CD14-positive monocyte (primary cell): ENCODE measurements at regions of chr16 and their contacts with region 1.

Region 1: GRCh38 chr16:81469710-81470535 is 25.3 kb downstream of the CMIP start:
- DNase-seq: peak; percentile 77 to 91 (median 78)
- H3K4me3 ChIP-seq: peak overlapping the region in 1 of 3 experiments; percentile 55
- H3K4me3 Mint-ChIP-seq: peak overlapping the region; percentile 67 to 77
- H3K27ac ChIP-seq: peak overlapping the region; percentile 82 to 87
- H3K27ac Mint-ChIP-seq: peak overlapping the region; percentile 89 to 97 (median 96)
- H3K4me1 ChIP-seq: peaks cover 98 to 100% of the 10 kb centered on the region in 2 donors
- H3K4me1 Mint-ChIP-seq: peaks cover 93% of the 10 kb centered on the region
- H3K27me3 ChIP-seq: no peaks in the 10 kb centered on the region
- H3K27me3 Mint-ChIP-seq: peaks cover 0 to 6% (median 3%) of the 10 kb centered on the region in 3 donors
- CTCF ChIP-seq: no peak

Region 2: DNA sequence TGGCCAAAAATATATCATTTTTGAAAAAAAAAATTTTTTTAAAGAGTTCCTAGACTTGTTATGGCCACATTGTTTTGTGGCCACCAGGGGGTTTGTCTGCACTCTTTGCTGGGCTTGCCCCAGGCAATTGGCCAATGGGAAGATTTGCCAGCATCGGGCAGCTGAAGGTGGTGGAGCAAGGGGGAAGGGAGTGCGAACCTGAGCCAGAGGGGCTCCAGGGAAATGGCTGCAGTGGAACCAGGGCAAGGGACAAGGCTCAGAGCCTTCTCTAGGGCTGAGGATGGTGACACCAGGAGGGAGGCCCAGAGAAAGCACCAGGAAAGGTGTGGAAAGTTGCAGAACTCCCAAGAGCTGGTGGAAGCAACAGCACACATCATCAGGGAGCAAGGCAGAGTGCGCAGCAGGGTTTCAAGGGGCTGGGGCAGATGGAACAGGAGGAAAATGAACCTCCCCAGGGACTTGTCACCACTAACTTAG is 40.8 kb before region 1 on chr16:
- intact Hi-C with region 1: loop called in 1 of 2 experiments (anchors 10 kb)
- DNase-seq: peak; percentile 62 to 76 (median 69)
- H3K4me3 ChIP-seq: no peak overlapping the region
- H3K4me3 Mint-ChIP-seq: peak overlapping the region in 1 of 2 donors; percentile 52
- H3K27ac ChIP-seq: no peak overlapping the region
- H3K27ac Mint-ChIP-seq: peak overlapping the region in 3 of 7 donors; percentile 33 to 59 (median 50)
- H3K4me1 ChIP-seq: peaks cover 47 to 57% of the 10 kb centered on the region in 2 donors
- H3K4me1 Mint-ChIP-seq: peaks cover 54% of the 10 kb centered on the region
- H3K27me3 ChIP-seq: no peaks in the 10 kb centered on the region
- H3K27me3 Mint-ChIP-seq: peaks cover 0 to 8% (median 4%) of the 10 kb centered on the region in 3 donors
- CTCF ChIP-seq: peak; percentile 82

Region 3: GRCh38 chr16:81500833-81501521 is 31.1 kb after region 1 on chr16:
- intact Hi-C with region 1: loop called in 1 of 2 experiments (anchors 5 kb)
- DNase-seq: peak; percentile 64 to 76 (median 70)
- H3K4me3 ChIP-seq: peak overlapping the region in 1 of 3 experiments; percentile 5
- H3K4me3 Mint-ChIP-seq: peak overlapping the region; percentile 44 to 63
- H3K27ac ChIP-seq: peak overlapping the region; percentile 68 to 79
- H3K27ac Mint-ChIP-seq: peak overlapping the region; percentile 84 to 99 (median 95)
- H3K4me1 ChIP-seq: peaks cover 78 to 97% of the 10 kb centered on the region in 2 donors
- H3K4me1 Mint-ChIP-seq: peaks cover 80% of the 10 kb centered on the region
- H3K27me3 ChIP-seq: no peaks in the 10 kb centered on the region
- H3K27me3 Mint-ChIP-seq: no peaks in the 10 kb centered on the region
- CTCF ChIP-seq: no peak

Region 4: GRCh38 chr16:81632392-81633146 is 162.6 kb after region 1 on chr16:
- intact Hi-C with region 1: loop called in 1 of 2 experiments (anchors 10 kb)
- DNase-seq: peak; percentile 92 to 99 (median 92)
- H3K4me3 ChIP-seq: peak overlapping the region in 1 of 3 experiments; percentile 14
- H3K4me3 Mint-ChIP-seq: peak overlapping the region; percentile 22 to 37
- H3K27ac ChIP-seq: peak overlapping the region; percentile 65 to 77
- H3K27ac Mint-ChIP-seq: peak overlapping the region in 6 of 7 donors; percentile 88 to 96 (median 94)
- H3K4me1 ChIP-seq: peaks cover 25 to 40% of the 10 kb centered on the region in 2 donors
- H3K4me1 Mint-ChIP-seq: peaks cover 72% of the 10 kb centered on the region
- H3K27me3 ChIP-seq: no peaks in the 10 kb centered on the region
- H3K27me3 Mint-ChIP-seq: peaks cover 0 to 5% (median 3%) of the 10 kb centered on the region in 3 donors
- CTCF ChIP-seq: no peak